ENCODE measurements at regions of chrX and their contacts with region 1.

Region 1: GRCh38 chrX:76253432-76253831 is 80.6 kb downstream of the PBDC1 start:
- DNase-seq: peak; percentile 56
- ATAC-seq: peak; percentile 88
- H3K4me3 ChIP-seq: no peak overlapping the region
- H3K27ac ChIP-seq: no peak overlapping the region
- H3K4me1 ChIP-seq: no peaks in the 10 kb centered on the region
- H3K27me3 ChIP-seq: no peaks in the 10 kb centered on the region
- CTCF ChIP-seq: peak; percentile 60

Region 2: DNA sequence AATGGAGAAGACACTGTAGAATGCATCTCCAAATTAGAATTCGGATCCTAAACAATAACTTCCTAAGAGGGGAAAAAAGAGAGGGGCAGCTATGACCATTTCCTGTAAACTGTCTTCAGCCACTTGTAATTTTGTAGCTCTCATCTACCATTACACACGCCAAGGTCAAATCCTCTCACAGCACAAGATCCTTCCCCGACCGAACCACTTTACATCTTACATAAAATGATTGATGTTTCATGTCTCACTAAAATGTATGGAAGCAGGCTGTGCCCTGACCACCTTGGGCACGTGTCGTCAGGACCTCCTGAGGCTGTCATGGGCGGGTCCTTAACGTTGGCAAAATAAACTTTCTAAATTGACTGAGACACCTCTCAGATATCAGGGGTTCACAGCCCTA is 104.7 kb before region 1 on chrX:
- CTCF ChIA-PET with region 1: no interaction called
- POLR2A ChIA-PET with region 1: no interaction called
- intact Hi-C with region 1: loop called (anchors 5 kb)
- DNase-seq: peak; percentile 60
- ATAC-seq: peak; percentile 39
- H3K4me3 ChIP-seq: peak overlapping the region; percentile 53
- H3K27ac ChIP-seq: peak overlapping the region; percentile 93
- H3K4me1 ChIP-seq: peaks cover 22% of the 10 kb centered on the region
- H3K27me3 ChIP-seq: no peaks in the 10 kb centered on the region
- CTCF ChIP-seq: no peak

Region 3: GRCh38 chrX:76155786-76156185 is 97.6 kb before region 1 on chrX:
- CTCF ChIA-PET with region 1: no interaction called
- POLR2A ChIA-PET with region 1: no interaction called
- intact Hi-C with region 1: loop called (anchors 5 kb)
- DNase-seq: no peak
- ATAC-seq: no peak
- H3K4me3 ChIP-seq: no peak overlapping the region
- H3K27ac ChIP-seq: no peak overlapping the region
- H3K4me1 ChIP-seq: no peaks in the 10 kb centered on the region
- H3K27me3 ChIP-seq: no peaks in the 10 kb centered on the region
- CTCF ChIP-seq: no peak

Region 4: DNA sequence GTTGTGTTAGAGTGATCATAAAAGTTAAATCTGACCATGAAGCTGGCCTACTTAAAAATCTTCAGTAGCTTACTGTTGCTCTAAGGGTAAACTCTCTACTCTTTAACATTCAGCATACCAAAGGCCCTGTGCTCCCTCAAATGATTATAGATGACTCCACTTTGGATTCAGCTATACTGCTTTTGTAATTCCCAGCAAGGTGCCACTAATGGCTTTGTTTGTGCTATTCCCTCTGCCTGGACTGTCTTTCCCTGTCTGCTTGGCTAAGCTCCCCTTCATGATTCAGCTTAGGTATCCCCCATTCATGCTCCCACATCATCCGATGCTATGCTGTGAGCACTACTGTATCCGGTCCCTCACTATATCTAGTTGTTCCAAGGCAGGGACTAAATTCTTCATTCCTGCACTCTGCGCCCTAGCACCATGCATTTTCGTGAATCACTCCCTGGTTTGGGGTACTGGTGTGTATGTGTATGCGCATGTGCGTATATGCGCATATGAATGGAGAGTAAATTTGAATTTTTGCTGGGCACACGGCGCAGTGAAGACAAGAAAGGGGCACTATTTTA is 81.0 kb before region 1 on chrX:
- CTCF ChIA-PET with region 1: no interaction called
- POLR2A ChIA-PET with region 1: no interaction called
- intact Hi-C with region 1: loop called (anchors 5 kb)
- DNase-seq: no peak
- ATAC-seq: peak; percentile 58
- H3K4me3 ChIP-seq: peak overlapping the region; percentile 88
- H3K27ac ChIP-seq: peak overlapping the region; percentile 80
- H3K4me1 ChIP-seq: peaks cover 21% of the 10 kb centered on the region
- H3K27me3 ChIP-seq: no peaks in the 10 kb centered on the region
- CTCF ChIP-seq: no peak

Region 5: GRCh38 chrX:76228499-76228898 is 24.9 kb before region 1 on chrX:
- CTCF ChIA-PET with region 1: no interaction called
- POLR2A ChIA-PET with region 1: no interaction called
- intact Hi-C with region 1: no loop called
- DNase-seq: no peak
- ATAC-seq: no peak
- H3K4me3 ChIP-seq: no peak overlapping the region
- H3K27ac ChIP-seq: no peak overlapping the region
- H3K4me1 ChIP-seq: no peaks in the 10 kb centered on the region
- H3K27me3 ChIP-seq: no peaks in the 10 kb centered on the region
- CTCF ChIP-seq: no peak

Region 6: GRCh38 chrX:76398461-76398860 is 145.0 kb after region 1 on chrX:
- CTCF ChIA-PET with region 1: no interaction called
- POLR2A ChIA-PET with region 1: no interaction called
- intact Hi-C with region 1: no loop called
- DNase-seq: no peak
- ATAC-seq: no peak
- H3K4me3 ChIP-seq: no peak overlapping the region
- H3K27ac ChIP-seq: no peak overlapping the region
- H3K4me1 ChIP-seq: no peaks in the 10 kb centered on the region
- H3K27me3 ChIP-seq: no peaks in the 10 kb centered on the region
- CTCF ChIP-seq: no peak

Measured in PC-3 (cell line).